Activated CD4-positive, alpha-beta T cell treated with anti-CD3 and anti-CD28 coated beads, Interleukin-2, amount 10 ng/mL, durations not matched to agents 24 days and 14 days (primary cell): ENCODE measurements at regions of chr11 and their contacts with region 1.

Region 1: GRCh38 chr11:110086892-110087309 is 6.3 kb upstream of the ZC3H12C start:
- DNase-seq: no peak
- H3K4me3 Mint-ChIP-seq: no peak overlapping the region
- H3K27ac Mint-ChIP-seq: no peak overlapping the region
- H3K4me1 Mint-ChIP-seq: peaks cover 8% of the 10 kb centered on the region
- H3K27me3 Mint-ChIP-seq: peaks cover 20% of the 10 kb centered on the region

Region 2: GRCh38 chr11:109991835-109992234 is 95.1 kb before region 1 on chr11:
- intact Hi-C with region 1: no loop called
- DNase-seq: no peak
- H3K4me3 Mint-ChIP-seq: no peak overlapping the region
- H3K27ac Mint-ChIP-seq: no peak overlapping the region
- H3K4me1 Mint-ChIP-seq: no peaks in the 10 kb centered on the region
- H3K27me3 Mint-ChIP-seq: peaks cover 10% of the 10 kb centered on the region

Region 3: GRCh38 chr11:110022548-110022947 is 64.4 kb before region 1 on chr11:
- intact Hi-C with region 1: no loop called
- DNase-seq: no peak
- H3K4me3 Mint-ChIP-seq: no peak overlapping the region
- H3K27ac Mint-ChIP-seq: no peak overlapping the region
- H3K4me1 Mint-ChIP-seq: no peaks in the 10 kb centered on the region
- H3K27me3 Mint-ChIP-seq: no peaks in the 10 kb centered on the region

Region 4: DNA sequence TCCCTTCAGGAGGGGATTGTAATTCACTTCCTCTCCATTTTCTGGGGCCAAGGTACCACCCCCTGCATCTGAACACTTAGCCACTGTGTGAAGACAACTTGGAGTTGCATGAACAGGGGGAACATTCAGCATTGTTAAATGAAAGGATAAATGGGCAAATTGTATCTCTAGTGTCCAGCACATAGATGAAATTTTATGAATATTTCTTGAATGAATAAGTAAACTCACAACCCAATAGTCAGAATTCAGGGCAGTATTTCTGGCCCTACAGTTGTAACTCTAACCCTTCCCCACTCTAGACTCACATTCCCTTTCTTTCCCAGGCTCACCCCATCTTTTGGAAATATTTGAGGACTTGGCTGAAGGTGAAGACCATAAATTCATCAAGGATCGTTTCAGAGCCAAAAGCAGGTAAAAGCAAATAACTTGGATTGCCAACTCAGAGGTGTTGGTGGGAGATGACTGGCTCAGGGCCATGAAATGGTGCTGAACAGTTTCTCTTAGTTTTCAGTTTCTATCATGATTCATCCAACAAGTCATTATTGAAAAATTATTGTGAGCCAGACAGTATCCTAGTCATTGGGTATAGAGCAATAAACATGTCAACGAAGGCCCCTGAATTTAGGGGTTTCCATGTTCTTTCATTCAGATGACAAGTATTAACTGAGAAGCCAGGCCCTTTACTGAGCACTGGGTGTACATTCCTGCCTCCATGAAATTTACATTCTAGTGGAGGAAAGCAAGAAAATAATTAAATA is 27.0 kb before region 1 on chr11:
- intact Hi-C with region 1: no loop called
- DNase-seq: peak; percentile 28
- H3K4me3 Mint-ChIP-seq: no peak overlapping the region
- H3K27ac Mint-ChIP-seq: no peak overlapping the region
- H3K4me1 Mint-ChIP-seq: no peaks in the 10 kb centered on the region
- H3K27me3 Mint-ChIP-seq: peaks cover 23% of the 10 kb centered on the region

Region 5: GRCh38 chr11:111259896-111260295 is 1173.0 kb after region 1 on chr11:
- intact Hi-C with region 1: no loop called
- DNase-seq: no peak
- H3K4me3 Mint-ChIP-seq: no peak overlapping the region
- H3K27ac Mint-ChIP-seq: no peak overlapping the region
- H3K4me1 Mint-ChIP-seq: no peaks in the 10 kb centered on the region
- H3K27me3 Mint-ChIP-seq: peaks cover 33% of the 10 kb centered on the region

Region 6: GRCh38 chr11:111526501-111526900 is 1439.6 kb after region 1 on chr11:
- intact Hi-C with region 1: loop called (anchors 10 kb)
- DNase-seq: no peak
- H3K4me3 Mint-ChIP-seq: peak overlapping the region; percentile 30
- H3K27ac Mint-ChIP-seq: peak overlapping the region; percentile 59
- H3K4me1 Mint-ChIP-seq: peaks cover 40% of the 10 kb centered on the region
- H3K27me3 Mint-ChIP-seq: no peaks in the 10 kb centered on the region